Heart right ventricle (tissue), 16 donors: ENCODE measurements at regions of chr21 and their contacts with region 1.

Region 1: DNA sequence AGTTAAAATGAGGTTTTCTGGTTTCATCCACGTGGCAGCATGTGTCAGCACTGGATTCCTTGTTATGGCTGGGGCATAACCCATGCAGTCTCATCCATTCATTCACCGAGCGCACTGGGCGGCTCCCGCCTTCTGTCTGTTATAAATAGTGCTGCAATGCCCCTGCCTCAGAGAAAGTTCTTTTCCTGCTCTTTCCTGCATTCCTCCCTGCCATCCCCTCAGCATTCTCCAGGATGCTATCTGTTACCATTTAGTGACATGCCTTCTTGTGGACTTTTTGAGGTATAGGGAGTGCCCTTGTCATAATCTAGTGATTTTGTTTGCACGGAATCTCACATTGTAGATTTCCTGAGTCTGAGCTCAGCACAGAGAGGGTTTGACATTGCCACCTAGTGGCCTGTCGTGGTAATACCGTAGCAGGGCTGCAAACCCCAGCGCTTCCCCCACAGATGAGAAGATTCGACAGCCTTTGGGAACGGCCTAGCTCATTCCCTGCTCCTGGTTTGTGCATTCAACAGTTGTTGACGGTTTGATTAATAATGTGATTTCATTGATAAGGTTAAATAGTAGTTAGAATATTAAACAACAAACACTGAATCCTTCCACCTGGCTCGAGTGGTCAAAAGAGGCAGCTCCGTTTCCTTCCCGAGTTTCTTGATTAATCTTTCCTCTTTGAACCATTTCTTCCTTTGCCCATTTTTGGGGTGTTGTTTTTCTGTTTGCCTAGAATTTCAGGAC is 46.3 kb downstream of the UMODL1 start:
- DNase-seq: peak; percentile 65 to 68
- ATAC-seq: peak; percentile 69 to 84 (median 78)
- H3K4me3 ChIP-seq: peak overlapping the region in 3 of 10 donors; percentile 1 to 31 (median 9)
- H3K27ac ChIP-seq: no peak overlapping the region
- H3K4me1 ChIP-seq: peaks cover 0 to 27% (median 11%) of the 10 kb centered on the region in 9 donors
- H3K27me3 ChIP-seq: peaks cover 0 to 81% (median 55%) of the 10 kb centered on the region in 7 donors
- CTCF ChIP-seq: peak; percentile 91 to 96 (median 94)

Region 2: GRCh38 chr21:41304068-41304720 is 813.2 kb before region 1 on chr21:
- intact Hi-C with region 1: no loop called
- DNase-seq: no peak
- ATAC-seq: no peak
- H3K4me3 ChIP-seq: no peak overlapping the region
- H3K27ac ChIP-seq: no peak overlapping the region
- H3K4me1 ChIP-seq: no peaks in the 10 kb centered on the region
- H3K27me3 ChIP-seq: peaks cover 0 to 26% (median 7%) of the 10 kb centered on the region in 7 donors
- CTCF ChIP-seq: no peak

Region 3: DNA sequence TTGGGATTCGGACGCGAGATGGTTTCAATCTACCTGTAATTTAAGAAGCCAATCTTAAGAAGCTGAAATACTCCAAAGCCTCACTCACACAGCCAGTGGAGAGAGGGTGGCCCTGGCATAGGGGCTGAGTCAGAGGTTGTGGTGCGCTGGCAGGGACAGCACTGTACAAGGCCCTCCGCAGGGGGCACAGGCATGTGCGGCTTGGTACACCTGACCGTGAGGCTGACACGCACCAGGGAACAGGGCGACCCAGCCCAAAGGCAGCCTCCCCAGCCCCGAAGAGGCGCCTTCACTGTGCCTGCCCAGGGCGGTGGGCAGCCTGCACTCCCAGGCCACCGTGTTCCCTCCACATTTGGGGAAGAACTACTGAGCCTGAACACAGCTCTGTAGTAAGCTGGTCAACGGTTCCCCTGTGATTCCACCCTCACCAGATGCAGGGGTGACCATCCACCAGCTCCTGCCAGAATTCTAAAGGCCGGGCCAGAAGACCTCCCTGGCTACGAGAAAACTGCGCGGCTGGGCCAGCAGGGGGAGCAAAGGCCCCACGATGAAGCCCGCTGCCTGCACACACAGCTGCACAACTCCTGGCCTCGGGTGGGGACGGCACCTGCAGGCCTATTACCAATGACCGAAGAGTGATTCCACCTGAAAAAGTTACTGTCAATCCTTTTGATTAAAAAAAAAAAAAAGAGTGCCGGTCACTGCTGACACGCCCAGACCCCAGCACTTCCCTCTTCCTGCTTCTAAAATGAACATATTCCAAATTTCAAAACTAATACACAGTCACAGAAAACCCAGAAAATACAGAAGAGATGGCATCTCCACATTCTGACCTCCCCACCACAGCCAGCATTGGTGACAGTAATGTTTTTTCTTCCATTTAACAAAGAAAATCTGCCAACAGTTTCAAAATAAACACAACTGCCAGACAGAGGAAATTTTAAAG is 300.9 kb before region 1 on chr21:
- intact Hi-C with region 1: loop called (anchors 1 to 5 kb)
- DNase-seq: peak; percentile 48 to 63
- ATAC-seq: peak; percentile 65 to 95 (median 82)
- H3K4me3 ChIP-seq: no peak overlapping the region
- H3K27ac ChIP-seq: no peak overlapping the region
- H3K4me1 ChIP-seq: peaks cover 0 to 9% (median 4%) of the 10 kb centered on the region in 9 donors
- H3K27me3 ChIP-seq: no peaks in the 10 kb centered on the region
- CTCF ChIP-seq: peak; percentile 62 to 85 (median 83)

Region 4: DNA sequence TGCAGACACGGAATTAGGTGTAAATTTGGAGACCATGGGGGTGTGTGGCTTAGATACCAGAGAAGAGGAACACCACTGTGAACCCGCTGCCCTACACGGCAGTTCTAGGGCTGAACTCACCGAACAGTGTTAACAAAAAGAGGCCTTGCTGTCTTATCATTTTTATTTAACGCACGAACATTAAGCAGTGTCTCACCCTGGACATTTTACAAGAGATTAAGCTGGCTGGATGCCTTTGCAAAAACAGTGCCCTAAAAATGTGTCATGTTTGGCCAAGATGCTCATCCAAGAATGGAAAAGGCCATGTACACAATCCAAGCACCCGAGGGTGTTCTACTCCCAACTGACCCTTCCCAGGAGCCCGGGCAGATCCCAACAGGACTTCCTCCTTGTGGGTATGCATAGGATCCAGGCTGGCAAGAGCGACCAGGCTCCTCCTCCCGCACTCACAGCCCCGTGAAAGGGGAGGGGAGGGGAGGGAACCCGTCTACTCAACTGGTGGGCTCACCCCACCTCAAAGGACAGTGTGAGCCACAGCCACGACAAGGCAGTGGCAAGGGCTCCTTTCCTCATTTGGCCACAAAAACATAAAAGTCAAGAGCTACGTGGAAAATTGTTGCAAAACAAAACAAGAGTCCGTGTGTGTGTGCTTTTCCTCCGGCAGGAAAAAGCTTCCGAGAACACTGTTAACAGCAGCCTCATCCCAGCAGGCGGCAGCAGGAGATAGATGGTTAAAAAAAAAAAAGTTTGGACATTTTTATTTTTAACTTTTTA is 183.9 kb before region 1 on chr21:
- intact Hi-C with region 1: loop called in 3 of 10 experiments (anchors 5 to 10 kb)
- DNase-seq: no peak
- ATAC-seq: peak; percentile 16 to 72 (median 53)
- H3K4me3 ChIP-seq: peak overlapping the region in 7 of 10 donors; percentile 25 to 45 (median 38)
- H3K27ac ChIP-seq: peak overlapping the region in 9 of 10 donors; percentile 12 to 83 (median 66)
- H3K4me1 ChIP-seq: peaks cover 3 to 41% (median 24%) of the 10 kb centered on the region in 9 donors
- H3K27me3 ChIP-seq: no peaks in the 10 kb centered on the region
- CTCF ChIP-seq: peak in 8 of 9 donors; percentile 12 to 59 (median 42)

Region 5: DNA sequence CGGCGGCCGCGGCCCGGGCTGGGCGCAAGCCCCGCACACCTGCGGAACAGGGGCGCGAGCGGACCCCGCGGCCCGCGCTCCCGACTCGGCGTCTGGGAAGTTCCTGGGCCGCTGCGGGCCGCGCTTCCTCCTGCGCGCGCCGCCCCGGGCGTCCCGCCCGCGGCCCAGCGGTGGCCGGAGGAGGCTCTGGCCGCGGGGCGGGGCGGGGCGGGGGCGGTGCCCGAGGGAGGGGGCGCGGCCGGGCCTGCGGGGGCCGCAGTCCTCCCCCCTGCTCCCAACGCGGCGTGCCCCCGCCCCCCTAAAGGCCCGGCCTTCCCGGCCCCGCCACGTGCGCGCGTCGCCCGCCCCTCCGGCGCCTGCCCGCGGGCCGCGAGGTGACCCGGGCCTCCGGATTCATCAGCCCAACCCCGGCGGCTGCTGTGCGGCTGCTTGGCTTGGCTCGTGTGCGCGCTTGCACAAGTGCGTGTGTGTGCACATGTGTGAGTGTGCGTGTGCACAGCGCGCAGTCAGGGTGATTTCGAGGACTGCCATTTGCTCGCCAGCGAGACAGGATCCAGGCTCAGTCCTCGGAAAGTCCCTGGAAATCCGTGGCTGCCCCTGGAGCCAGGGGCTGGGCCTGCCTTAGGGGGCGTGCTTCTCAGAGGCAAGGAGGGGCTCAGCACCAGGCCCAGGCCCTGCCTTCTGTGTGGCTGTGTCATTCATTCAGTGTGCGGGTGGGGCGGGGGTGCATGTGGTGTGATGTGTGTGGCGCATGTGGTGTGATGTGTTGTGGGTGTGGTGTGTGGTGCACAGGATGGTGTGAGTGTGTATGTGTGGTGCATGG is 163.4 kb before region 1 on chr21 and contains the start of gene C2CD2:
- intact Hi-C with region 1: loop called in 3 of 10 experiments (anchors 10 kb)
- DNase-seq: peak; percentile 69 to 82
- ATAC-seq: peak; percentile 64 to 89 (median 77)
- H3K4me3 ChIP-seq: peak within 1 kb of the TSS; percentile 12 to 91 (median 80)
- H3K27ac ChIP-seq: peak within 1 kb of the TSS; percentile 50 to 88 (median 79)
- H3K4me1 ChIP-seq: peaks cover 11 to 66% (median 41%) of the 10 kb centered on the region in 9 donors
- H3K27me3 ChIP-seq: peaks cover 0 to 9% (median 0%) of the 10 kb centered on the region in 7 donors
- CTCF ChIP-seq: peak in 2 of 9 donors; percentile 11 to 18
- total RNA-seq, gene C2CD2: 4.5 to 11.1 (median 6.9) TPM